ENCODE measurements at regions of chr14 and their contacts with region 1.

Region 1: DNA sequence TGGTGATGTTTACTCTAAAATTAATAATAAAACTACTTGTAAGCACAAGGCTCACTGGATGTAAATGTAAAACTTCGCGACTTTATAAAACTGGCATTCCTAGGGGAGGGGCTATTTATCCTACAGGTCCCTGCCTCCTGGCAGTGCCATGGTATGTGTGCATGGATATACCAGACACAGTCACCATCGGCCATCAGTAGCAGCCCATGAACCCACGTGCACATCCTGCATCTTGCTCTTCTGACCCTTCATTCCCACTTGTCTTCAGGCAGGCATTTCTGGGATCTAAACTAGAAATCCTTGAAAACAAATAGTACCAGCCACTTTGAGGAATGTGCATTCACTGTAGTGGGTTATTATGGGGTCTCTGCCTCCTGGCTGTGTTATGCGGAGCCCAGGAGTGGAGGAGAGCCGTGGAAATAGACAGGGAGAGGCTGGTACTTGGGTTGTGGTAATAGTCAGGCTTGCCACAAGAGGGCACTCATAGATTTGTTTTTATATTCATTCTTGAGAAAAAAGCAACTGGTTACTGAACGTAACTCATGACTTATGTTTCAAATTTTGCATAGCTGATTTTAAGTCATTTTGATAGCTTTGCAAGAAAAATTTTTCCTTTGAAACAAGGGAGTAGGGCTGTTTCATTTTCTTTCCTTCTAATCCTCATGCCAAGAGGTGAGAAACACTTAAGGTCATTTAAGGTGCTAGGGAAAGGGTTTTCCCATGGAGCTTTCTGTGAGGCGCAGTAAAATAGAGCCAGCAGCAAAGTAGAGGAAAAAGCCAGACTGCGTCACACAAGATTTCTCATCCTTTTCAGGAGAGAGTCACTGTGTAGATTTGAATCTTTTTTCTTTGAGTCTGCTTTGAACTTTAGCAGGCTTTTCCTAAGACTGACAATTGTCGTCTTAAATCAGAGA is 17.4 kb upstream of the GALNT16 start:
- DNase-seq: peak; percentile 52
- H3K4me3 Mint-ChIP-seq: no peak overlapping the region
- H3K27ac Mint-ChIP-seq: no peak overlapping the region
- H3K4me1 Mint-ChIP-seq: peaks cover 2% of the 10 kb centered on the region
- H3K27me3 Mint-ChIP-seq: no peaks in the 10 kb centered on the region

Region 2: DNA sequence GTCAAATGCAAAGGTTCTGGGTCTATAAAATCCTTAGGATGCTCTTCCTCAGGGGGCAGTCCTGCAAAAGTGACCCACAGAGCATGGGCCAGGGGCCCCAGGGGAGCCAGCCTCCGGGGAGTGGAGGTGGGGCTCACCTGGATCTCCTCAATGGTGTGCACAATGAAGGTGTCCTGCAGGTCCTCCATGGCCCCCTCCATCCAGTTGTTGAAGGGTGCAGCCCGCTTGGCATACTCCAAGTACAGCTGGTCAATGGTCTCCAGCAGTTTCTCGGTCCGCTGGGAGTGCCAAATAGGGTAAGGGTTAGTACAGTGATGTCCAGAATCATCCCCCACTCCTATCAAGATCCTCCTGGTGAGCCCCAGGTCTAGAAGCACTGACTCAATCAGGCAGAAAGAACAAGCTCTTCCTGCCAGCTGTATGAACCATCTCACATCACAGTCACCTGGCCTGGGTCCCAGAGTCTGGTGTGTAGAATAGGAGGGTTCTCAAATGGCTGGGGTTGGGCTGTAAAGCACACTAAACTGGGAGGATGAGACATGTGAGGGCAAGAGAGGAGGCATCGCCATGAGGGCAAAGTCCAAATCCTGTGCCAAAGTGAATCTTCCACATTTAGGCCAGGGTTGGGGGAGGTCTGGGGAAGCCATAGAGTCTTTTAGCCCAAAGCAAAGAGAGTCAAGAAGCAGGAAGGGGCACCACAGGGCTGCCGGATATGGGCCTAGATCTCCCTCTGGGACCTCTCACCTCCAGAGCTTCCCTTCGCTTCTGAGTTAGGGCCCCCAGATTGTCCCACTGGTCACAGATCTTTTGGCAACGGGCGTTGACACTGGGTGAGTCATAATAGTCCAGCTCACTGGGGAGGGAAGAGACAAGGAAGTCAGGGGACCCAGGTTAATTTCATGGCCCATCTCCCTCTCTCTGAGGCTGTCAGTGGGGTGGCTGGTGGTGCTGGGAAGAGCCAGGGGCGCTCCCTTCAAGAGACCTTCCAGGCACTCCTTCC is 358.2 kb before region 1 on chr14:
- CTCF ChIA-PET with region 1: no interaction called
- POLR2A ChIA-PET with region 1: no interaction called
- DNase-seq: no peak
- H3K4me3 Mint-ChIP-seq: no peak overlapping the region
- H3K27ac Mint-ChIP-seq: no peak overlapping the region
- H3K4me1 Mint-ChIP-seq: no peaks in the 10 kb centered on the region
- H3K27me3 Mint-ChIP-seq: no peaks in the 10 kb centered on the region

Region 3: GRCh38 chr14:69129264-69129880 is 113.2 kb before region 1 on chr14:
- CTCF ChIA-PET with region 1: interaction called, 18 read pairs
- POLR2A ChIA-PET with region 1: no interaction called
- DNase-seq: peak; percentile 73
- H3K4me3 Mint-ChIP-seq: no peak overlapping the region
- H3K27ac Mint-ChIP-seq: no peak overlapping the region
- H3K4me1 Mint-ChIP-seq: peaks cover 28% of the 10 kb centered on the region
- H3K27me3 Mint-ChIP-seq: no peaks in the 10 kb centered on the region

Region 4: DNA sequence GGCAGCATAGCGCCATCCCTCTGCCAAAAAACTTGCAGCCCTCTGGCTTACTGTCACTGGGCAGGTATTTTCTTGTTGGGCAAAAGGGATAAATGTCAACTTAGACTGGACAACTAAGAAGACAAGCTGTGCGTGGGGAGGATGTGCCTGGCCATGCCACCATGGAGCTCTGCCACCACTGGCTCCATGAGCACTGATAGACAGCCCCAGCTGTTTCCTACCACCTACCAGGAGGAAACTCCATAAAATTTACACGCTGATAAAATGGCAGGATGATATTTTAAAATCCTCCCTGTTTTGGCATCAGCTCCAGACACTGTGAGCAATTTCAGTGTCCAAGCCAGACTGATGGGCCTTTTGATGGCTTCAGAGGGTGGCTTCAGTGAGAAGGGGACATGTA is 10.3 kb after region 1 on chr14:
- CTCF ChIA-PET with region 1: interaction called, 12 read pairs
- POLR2A ChIA-PET with region 1: no interaction called
- DNase-seq: no peak
- H3K4me3 Mint-ChIP-seq: no peak overlapping the region
- H3K27ac Mint-ChIP-seq: no peak overlapping the region
- H3K4me1 Mint-ChIP-seq: no peaks in the 10 kb centered on the region
- H3K27me3 Mint-ChIP-seq: peaks cover 34% of the 10 kb centered on the region

Region 5: DNA sequence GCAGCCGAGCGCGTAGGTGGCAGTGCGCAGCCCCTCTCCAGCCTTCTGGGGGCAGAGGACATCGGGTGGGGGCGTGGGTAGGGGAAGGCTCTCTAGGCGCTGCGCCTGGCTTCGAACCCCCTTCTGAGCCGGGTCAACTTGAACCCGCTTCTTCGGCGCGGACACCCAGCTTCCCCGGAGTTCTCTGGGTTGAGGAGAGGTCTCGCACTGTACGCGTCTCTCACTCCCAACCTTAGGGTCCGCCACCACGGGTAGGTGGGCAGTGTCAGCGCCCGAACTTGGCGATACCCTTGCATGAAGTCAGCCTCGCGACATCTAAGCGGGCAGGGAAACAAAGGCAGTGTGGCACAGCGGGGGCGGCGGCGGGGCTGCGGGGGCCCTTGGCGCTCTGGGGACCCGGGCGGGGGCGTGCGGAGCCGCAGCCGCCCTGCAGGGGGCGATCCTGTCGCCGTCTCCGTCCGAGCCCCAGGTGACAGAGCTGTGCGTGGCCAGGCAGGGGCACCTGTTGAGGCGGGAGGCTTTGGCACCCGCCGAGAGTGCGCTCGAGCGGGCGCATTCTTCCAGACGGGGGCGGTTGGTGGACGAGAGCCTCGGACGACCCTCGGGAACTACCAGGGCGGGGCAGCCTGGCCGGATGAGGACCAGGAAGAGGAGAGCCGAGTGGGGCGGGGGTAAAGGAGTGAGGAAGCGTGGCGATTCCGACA is 18.4 kb after region 1 on chr14:
- CTCF ChIA-PET with region 1: interaction called, 11 read pairs
- POLR2A ChIA-PET with region 1: no interaction called
- DNase-seq: peak; percentile 41
- H3K4me3 Mint-ChIP-seq: peak overlapping the region; percentile 48
- H3K27ac Mint-ChIP-seq: no peak overlapping the region
- H3K4me1 Mint-ChIP-seq: peaks cover 7% of the 10 kb centered on the region
- H3K27me3 Mint-ChIP-seq: peaks cover 69% of the 10 kb centered on the region

Region 6: GRCh38 chr14:69460093-69460701 is 217.6 kb after region 1 on chr14:
- CTCF ChIA-PET with region 1: interaction called, 39 read pairs
- POLR2A ChIA-PET with region 1: no interaction called
- DNase-seq: peak; percentile 64
- H3K4me3 Mint-ChIP-seq: no peak overlapping the region
- H3K27ac Mint-ChIP-seq: no peak overlapping the region
- H3K4me1 Mint-ChIP-seq: no peaks in the 10 kb centered on the region
- H3K27me3 Mint-ChIP-seq: no peaks in the 10 kb centered on the region